ENCODE measurements at regions of chr10 and their contacts with region 1.

Region 1: DNA sequence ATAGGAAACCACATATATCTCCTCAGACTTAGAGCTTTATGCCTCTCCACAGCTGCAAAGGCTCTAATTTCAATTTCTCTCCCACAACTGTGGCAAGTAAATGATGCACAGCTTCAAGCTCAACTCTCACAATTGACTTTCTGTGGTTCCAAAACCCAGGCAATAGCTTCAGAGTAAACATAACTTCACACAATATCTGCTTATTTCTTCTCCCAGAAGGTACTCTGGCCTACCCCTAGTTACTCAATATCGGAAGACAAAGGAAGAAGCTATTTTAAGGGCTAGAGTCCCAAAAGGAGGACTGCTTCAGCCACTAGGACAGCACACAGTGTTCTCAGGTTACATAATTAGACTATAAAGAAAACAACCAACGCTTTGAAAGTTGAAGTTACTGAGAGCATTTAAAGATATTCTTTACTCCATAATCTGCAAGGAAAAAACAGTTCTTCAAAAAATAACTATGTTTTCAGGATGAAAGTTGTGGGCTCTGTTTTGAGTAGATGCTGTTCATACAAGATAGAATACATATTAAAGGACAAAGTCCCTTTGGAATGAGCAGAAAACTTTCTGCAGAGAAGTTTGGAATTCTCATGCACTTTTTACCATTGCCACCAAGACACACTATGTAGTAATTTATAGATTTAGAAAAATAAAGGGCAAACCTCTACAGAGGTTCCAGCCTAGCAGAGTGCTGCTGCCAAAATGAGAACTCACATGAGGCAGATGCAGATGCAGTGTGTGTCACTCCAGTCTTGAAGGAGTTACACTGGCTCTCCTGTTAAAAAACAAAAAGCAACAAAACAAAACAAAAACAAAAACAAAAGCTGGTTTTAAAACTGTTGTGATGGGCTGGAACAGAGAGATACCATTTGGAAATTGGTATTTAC is 81.8 kb downstream of the NT5C2 start:
- DNase-seq: peak; percentile 59
- H3K4me3 Mint-ChIP-seq: no peak overlapping the region
- H3K27ac Mint-ChIP-seq: no peak overlapping the region
- H3K4me1 Mint-ChIP-seq: peaks cover 13% of the 10 kb centered on the region
- H3K27me3 Mint-ChIP-seq: no peaks in the 10 kb centered on the region
- CTCF ChIP-seq: no peak

Region 2: GRCh38 chr10:103141950-103142349 is 30.7 kb after region 1 on chr10:
- CTCF ChIA-PET with region 1: interaction called, 10 read pairs
- POLR2A ChIA-PET with region 1: no interaction called
- intact Hi-C with region 1: no loop called
- DNase-seq: no peak
- H3K4me3 Mint-ChIP-seq: no peak overlapping the region
- H3K27ac Mint-ChIP-seq: no peak overlapping the region
- H3K4me1 Mint-ChIP-seq: peaks cover 10% of the 10 kb centered on the region
- H3K27me3 Mint-ChIP-seq: no peaks in the 10 kb centered on the region
- CTCF ChIP-seq: no peak

Region 3: DNA sequence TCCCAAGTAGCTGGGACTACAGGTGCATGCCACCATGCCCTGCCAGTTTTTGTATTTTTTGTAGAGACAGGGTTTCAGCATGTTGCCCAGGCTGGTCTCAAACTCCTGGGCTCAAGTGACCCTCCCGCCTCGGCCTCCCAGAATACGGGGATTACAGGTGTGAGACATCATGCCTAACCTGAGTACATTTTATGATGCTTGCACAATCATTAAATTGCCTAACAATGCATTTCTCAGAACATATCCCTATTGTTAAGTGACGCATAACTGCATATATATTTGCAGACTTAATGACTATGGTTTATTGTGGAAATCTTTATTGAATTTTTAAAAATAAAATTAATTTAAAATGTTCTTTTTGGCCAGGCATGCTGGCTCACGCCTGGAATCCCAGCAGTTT is 196.3 kb after region 1 on chr10:
- CTCF ChIA-PET with region 1: no interaction called
- POLR2A ChIA-PET with region 1: no interaction called
- intact Hi-C with region 1: no loop called
- DNase-seq: peak; percentile 59
- H3K4me3 Mint-ChIP-seq: no peak overlapping the region
- H3K27ac Mint-ChIP-seq: no peak overlapping the region
- H3K4me1 Mint-ChIP-seq: no peaks in the 10 kb centered on the region
- H3K27me3 Mint-ChIP-seq: no peaks in the 10 kb centered on the region
- CTCF ChIP-seq: no peak